ENCODE measurements at regions of chr1 and their contacts with region 1.

Region 1: DNA sequence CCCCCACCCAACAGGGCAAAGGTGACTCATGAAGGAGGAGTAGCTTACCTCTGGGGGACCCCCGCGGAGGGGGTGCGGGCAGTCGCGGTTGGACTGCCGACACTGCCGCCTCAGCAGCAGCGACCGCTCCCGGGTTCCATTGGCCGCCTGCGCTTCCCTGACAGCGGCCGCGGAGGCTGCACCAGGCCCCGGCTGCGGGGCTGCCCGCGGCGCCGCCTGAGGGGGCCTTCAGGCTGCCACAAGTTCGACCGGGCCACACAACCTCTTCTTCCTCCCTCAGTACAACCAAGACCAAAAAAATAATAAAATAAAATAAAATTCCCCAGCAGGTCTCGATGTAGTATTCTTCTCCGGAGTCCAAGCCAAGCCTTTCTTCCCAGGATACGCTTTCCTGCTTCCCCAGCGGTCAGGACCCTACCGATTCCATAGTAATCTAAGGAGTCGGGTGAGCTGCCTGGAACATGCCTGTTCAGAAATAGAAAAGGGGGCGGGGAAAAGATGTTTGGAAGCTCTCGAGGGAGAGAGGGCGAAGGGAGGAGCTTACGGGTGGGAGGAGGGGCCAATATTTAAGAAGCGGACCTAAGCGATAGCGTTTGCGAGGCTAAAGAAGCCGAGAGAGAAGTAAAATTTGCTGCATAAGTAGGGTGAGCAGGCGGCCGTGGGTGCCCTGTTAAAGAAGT is at the start of gene PI4KB:
- DNase-seq: peak; percentile 97
- ATAC-seq: peak; percentile 96
- H3K4me3 ChIP-seq: peak within 1 kb of the TSS; percentile 80 to 82
- H3K27ac ChIP-seq: peak within 1 kb of the TSS; percentile 80
- H3K4me1 ChIP-seq: peaks cover 12 to 24% of the 10 kb centered on the region in 2 experiments
- H3K27me3 ChIP-seq: no peaks in the 10 kb centered on the region
- CTCF ChIP-seq: no peak
- POLR2A ChIP-seq: peak; percentile 68
- RAD21 ChIP-seq: no peak
- total RNA-seq, gene PI4KB: 45.1 TPM

Region 2: GRCh38 chr1:150944856-150945255 is 382.5 kb before region 1 on chr1:
- CTCF ChIA-PET with region 1: no interaction called
- POLR2A ChIA-PET with region 1: no interaction called
- RAD21 ChIA-PET with region 1: no interaction called
- intact Hi-C with region 1: no loop called
- DNase-seq: no peak
- ATAC-seq: no peak
- H3K4me3 ChIP-seq: no peak overlapping the region
- H3K27ac ChIP-seq: no peak overlapping the region
- H3K4me1 ChIP-seq: no peaks in the 10 kb centered on the region
- H3K27me3 ChIP-seq: no peaks in the 10 kb centered on the region
- CTCF ChIP-seq: no peak
- POLR2A ChIP-seq: no peak
- RAD21 ChIP-seq: no peak

Region 3: DNA sequence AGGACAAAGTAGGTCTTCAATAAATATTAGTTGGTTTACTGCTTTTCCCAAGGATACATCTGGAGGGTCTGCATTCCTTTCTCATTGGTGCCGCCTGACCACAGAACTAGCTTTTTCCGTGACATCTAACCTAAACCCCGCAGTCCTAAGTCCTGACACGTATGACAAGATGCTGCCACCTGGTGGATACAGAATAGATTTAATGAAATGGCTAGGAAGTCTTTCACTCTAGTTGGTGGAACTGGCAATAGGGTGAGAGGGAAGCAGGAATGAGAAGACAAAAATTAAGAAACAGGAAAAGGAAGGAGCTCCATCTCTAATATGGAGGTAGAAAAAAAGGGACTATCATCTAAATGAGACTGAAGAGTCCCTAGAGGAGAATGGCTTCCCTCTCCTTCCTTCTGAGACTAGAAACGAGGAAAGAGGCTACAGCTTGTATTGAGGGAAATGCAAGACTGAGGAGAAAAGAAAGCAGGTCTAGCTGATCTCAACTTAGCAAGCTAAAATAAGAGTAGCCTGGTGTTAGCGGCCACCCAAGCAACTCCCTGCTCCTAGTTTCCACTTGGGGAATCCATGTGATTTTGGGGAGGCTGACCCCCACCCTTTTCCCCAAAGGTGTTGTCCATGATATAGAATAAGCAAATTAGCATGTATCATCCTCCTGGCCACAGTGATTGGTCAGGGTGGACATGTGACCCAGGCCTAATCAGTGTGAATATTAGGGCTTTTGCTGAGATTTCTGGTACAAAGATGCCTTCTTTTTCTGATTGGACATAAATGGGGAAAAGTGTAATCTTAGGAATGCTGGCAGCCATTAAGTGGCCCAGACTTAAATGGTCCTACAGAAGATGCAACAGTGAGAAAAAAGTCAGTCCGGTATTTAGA is 13.7 kb after region 1 on chr1:
- CTCF ChIA-PET with region 1: interaction called, 26 read pairs
- POLR2A ChIA-PET with region 1: interaction called, 8 read pairs
- RAD21 ChIA-PET with region 1: interaction called, 3 to 6 read pairs
- intact Hi-C with region 1: no loop called
- DNase-seq: peak; percentile 75
- ATAC-seq: peak; percentile 92
- H3K4me3 ChIP-seq: no peak overlapping the region
- H3K27ac ChIP-seq: peak overlapping the region; percentile 12; the same call in 1 of the 2 replicates
- H3K4me1 ChIP-seq: peaks cover 0 to 20% of the 10 kb centered on the region in 2 experiments; a peak in 2 of 4 replicates
- H3K27me3 ChIP-seq: no peaks in the 10 kb centered on the region
- CTCF ChIP-seq: peak; percentile 55 to 94 (median 82); a peak in 5 of 6 replicates
- POLR2A ChIP-seq: no peak
- RAD21 ChIP-seq: peak; percentile 95

Region 4: GRCh38 chr1:151371366-151372060 is 44.1 kb after region 1 on chr1:
- CTCF ChIA-PET with region 1: no interaction called
- POLR2A ChIA-PET with region 1: no interaction called
- RAD21 ChIA-PET with region 1: no interaction called
- intact Hi-C with region 1: no loop called
- DNase-seq: no peak
- ATAC-seq: no peak
- H3K4me3 ChIP-seq: no peak overlapping the region
- H3K27ac ChIP-seq: no peak overlapping the region
- H3K4me1 ChIP-seq: peaks cover 0 to 2% of the 10 kb centered on the region in 2 experiments; a peak in 1 of 4 replicates
- H3K27me3 ChIP-seq: no peaks in the 10 kb centered on the region
- CTCF ChIP-seq: no peak
- POLR2A ChIP-seq: no peak
- RAD21 ChIP-seq: no peak

Region 5: GRCh38 chr1:151976858-151977257 is 649.5 kb after region 1 on chr1:
- CTCF ChIA-PET with region 1: no interaction called
- POLR2A ChIA-PET with region 1: no interaction called
- RAD21 ChIA-PET with region 1: no interaction called
- intact Hi-C with region 1: no loop called
- DNase-seq: no peak
- ATAC-seq: peak; percentile 78
- H3K4me3 ChIP-seq: no peak overlapping the region
- H3K27ac ChIP-seq: peak overlapping the region; percentile 32; the same call in 1 of the 2 replicates
- H3K4me1 ChIP-seq: peaks cover 59 to 84% of the 10 kb centered on the region in 2 experiments
- H3K27me3 ChIP-seq: no peaks in the 10 kb centered on the region
- CTCF ChIP-seq: no peak
- POLR2A ChIP-seq: no peak
- RAD21 ChIP-seq: no peak

Measured in HCT116 (cell line).